ENCODE measurements at regions of chr10 and their contacts with region 1.

Region 1: GRCh38 chr10:79400146-79401004 is 45.0 kb downstream of the ZCCHC24 start:
- DNase-seq: peak; percentile 82
- ATAC-seq: peak; percentile 78
- H3K4me3 Mint-ChIP-seq: no peak overlapping the region
- H3K27ac Mint-ChIP-seq: no peak overlapping the region
- H3K4me1 Mint-ChIP-seq: peaks cover 4% of the 10 kb centered on the region
- H3K27me3 Mint-ChIP-seq: peaks cover 2% of the 10 kb centered on the region

Region 2: DNA sequence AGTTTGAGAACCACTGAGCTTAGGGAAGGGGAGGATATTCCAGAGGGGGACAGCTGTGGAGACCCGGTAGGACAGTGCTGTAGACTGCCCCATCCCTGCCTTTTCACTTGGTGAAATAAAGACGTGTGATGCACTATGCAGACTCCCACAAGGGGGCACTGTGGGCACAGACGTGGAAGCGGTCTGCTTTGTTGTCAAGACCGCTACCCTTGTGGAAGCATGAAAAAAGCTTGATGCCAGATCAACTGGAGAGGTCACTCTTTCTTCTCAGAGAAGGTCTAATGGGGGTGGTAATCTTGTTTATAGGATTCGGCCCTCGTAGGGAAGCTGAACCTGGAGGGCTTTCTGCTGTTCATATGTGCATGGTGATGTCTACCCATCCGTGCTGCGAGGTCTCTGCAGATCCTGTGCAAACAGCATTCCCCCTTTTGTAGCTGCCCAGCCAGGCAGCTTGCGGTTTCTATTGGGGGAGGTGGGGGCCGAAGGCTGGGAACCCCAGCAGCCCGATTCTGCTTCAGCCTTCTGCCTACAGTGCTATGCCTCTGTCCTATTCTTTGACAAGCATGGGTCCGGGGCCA is 1353.0 kb before region 1 on chr10:
- CTCF ChIA-PET with region 1: no interaction called
- POLR2A ChIA-PET with region 1: no interaction called
- intact Hi-C with region 1: no loop called
- DNase-seq: peak; percentile 91
- ATAC-seq: peak; percentile 81
- H3K4me3 Mint-ChIP-seq: no peak overlapping the region
- H3K27ac Mint-ChIP-seq: no peak overlapping the region
- H3K4me1 Mint-ChIP-seq: peaks cover 23% of the 10 kb centered on the region
- H3K27me3 Mint-ChIP-seq: no peaks in the 10 kb centered on the region

Region 3: DNA sequence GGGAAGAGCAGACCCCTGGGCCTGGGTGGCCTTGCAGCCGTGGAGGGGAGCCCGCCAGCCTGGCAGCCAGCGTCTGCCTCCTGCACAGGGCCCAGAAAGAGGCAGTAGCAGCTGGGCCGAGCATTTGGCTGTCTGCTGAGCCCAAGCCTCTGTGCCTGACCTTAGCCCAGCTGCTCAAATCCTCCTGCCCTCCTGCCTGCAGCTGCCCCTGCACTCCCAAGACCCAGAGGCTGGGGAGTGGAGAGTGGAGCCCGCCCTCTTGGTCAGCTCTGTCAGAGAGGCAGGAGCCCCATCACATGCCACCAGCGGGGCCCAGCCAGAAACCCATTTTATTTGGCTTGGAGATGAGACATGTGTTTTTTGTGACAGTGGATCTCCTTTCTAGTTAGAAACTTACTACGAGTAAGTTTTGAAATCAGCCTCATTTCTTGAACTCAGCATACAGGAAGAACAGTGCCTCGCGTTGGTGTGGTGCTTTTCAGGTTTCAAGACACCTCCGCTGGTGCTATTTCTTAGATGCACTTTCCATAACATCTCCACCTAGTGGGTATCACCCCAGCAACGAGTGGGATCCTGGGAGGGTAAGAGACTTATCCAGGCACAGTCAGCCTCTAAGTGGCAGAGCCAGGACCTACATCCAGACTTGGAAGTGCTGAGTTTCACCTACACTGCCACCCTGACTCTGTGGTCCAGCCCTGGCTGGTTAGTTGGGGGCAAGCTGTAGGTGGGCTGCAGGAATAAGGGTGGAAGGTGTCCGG is 889.6 kb before region 1 on chr10:
- CTCF ChIA-PET with region 1: no interaction called
- POLR2A ChIA-PET with region 1: no interaction called
- intact Hi-C with region 1: no loop called
- DNase-seq: no peak
- ATAC-seq: peak; percentile 39
- H3K4me3 Mint-ChIP-seq: no peak overlapping the region
- H3K27ac Mint-ChIP-seq: no peak overlapping the region
- H3K4me1 Mint-ChIP-seq: no peaks in the 10 kb centered on the region
- H3K27me3 Mint-ChIP-seq: peaks cover 2% of the 10 kb centered on the region

Region 4: GRCh38 chr10:78875932-78876331 is 524.4 kb before region 1 on chr10:
- CTCF ChIA-PET with region 1: no interaction called
- POLR2A ChIA-PET with region 1: no interaction called
- intact Hi-C with region 1: no loop called
- DNase-seq: no peak
- ATAC-seq: no peak
- H3K4me3 Mint-ChIP-seq: no peak overlapping the region
- H3K27ac Mint-ChIP-seq: no peak overlapping the region
- H3K4me1 Mint-ChIP-seq: peaks cover 2% of the 10 kb centered on the region
- H3K27me3 Mint-ChIP-seq: peaks cover 13% of the 10 kb centered on the region

Region 5: GRCh38 chr10:79487296-79488194 is 87.2 kb after region 1 on chr10:
- CTCF ChIA-PET with region 1: no interaction called
- POLR2A ChIA-PET with region 1: no interaction called
- intact Hi-C with region 1: loop called in 1 of 2 experiments (anchors 1 kb)
- DNase-seq: peak; percentile 59
- ATAC-seq: peak; percentile 69
- H3K4me3 Mint-ChIP-seq: no peak overlapping the region
- H3K27ac Mint-ChIP-seq: no peak overlapping the region
- H3K4me1 Mint-ChIP-seq: no peaks in the 10 kb centered on the region
- H3K27me3 Mint-ChIP-seq: peaks cover 2% of the 10 kb centered on the region

Measured in activated CD4-positive, alpha-beta T cell treated with anti-CD3 and anti-CD28 coated beads for 36 hours (primary cell).